ENCODE measurements at regions of chr5 and their contacts with region 1.

Region 1: DNA sequence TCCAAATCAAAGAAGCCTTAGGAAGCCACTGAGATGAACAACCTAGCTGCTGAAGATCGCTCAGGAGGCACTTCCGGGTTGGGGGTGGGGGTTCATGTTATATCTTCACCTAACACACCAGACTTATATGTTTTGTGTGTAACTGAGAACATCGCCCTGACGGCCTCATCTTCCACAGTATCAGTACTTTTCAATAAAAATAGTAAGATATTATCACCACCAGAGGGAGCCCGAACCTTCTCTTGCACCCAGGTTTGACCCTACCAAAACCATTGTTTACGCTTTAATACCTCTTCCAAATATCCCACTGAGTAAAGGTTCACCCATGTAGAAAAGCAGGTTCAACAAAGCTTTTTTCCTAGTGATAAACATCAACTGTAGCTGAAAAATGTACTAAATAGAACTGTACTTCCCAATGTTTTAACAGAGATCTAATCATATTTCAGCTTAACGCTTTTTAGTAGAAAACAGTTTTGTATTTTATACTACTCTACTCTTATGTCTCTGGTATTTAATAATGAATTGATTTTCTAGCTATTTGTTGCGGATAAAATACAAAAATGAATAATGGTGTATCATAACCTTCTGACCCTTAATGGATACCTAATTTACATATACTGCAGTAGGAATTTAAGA is 244.0 kb downstream of the EPB41L4A start:
- DNase-seq: peak; percentile 67
- H3K4me3 ChIP-seq: peak overlapping the region; percentile 17 to 31; a peak in 1 of 4 replicates
- H3K27ac ChIP-seq: no peak overlapping the region
- H3K4me1 ChIP-seq: peaks cover 0 to 2% of the 10 kb centered on the region in 2 experiments; a peak in 1 of 4 replicates
- H3K27me3 ChIP-seq: no peaks in the 10 kb centered on the region
- CTCF ChIP-seq: peak; percentile 81
- EP300 ChIP-seq: no peak
- RAD21 ChIP-seq: peak; percentile 80

Region 2: DNA sequence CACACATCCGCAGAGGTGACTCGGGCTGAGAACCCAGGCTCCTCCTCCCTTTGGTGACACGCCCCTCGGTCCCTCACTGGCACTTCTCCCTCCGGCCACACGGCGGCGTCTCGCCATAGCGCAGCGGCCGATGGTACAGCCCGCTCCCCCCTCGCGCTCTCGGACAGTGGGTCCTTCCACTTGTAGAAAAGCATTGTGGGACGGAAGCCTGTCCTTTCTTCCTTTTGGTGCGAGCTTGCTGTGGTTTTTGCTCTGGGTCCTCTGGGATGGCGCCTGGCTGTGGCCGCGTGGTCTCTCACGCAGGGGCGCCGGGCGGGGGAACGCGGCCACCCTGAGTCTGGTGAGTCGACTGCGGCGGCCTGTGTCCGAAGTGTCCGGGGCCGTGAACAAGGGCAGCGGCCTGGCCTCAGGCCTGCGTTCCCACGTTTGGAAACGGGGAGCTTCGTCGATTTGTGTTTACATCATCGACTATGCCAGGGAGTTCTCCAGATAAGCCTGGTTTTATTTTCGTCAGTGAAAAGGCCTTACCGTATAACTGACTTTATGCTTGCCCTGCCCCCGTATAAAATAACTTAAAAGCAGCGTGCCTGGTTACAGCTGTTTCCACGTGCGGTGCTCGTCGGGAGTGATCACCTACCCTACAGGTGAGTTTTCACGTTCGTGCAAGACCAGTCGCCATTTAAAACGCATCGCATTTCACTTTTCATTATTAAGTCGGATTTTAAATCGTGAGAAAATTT is 14.3 kb before region 1 on chr5:
- CTCF ChIA-PET with region 1: interaction called, 49 read pairs
- POLR2A ChIA-PET with region 1: no interaction called
- DNase-seq: peak; percentile 92
- H3K4me3 ChIP-seq: peak overlapping the region; percentile 86 to 97
- H3K27ac ChIP-seq: peak overlapping the region; percentile 66 to 81; a peak in 3 of 4 replicates
- H3K4me1 ChIP-seq: peaks cover 0 to 9% of the 10 kb centered on the region in 2 experiments; a peak in 3 of 4 replicates
- H3K27me3 ChIP-seq: no peaks in the 10 kb centered on the region
- CTCF ChIP-seq: peak; percentile 96
- EP300 ChIP-seq: peak in 1 of 2 experiments; percentile 78; a peak in 1 of 4 replicates
- RAD21 ChIP-seq: 0 out of 2 replicates have a peak, but pooled peaks have one; percentile 28

Region 3: GRCh38 chr5:112186401-112186990 is 11.4 kb after region 1 on chr5:
- CTCF ChIA-PET with region 1: interaction called, 22 read pairs
- POLR2A ChIA-PET with region 1: no interaction called
- DNase-seq: peak; percentile 44
- H3K4me3 ChIP-seq: no peak overlapping the region; a peak in 1 of 4 replicates
- H3K27ac ChIP-seq: no peak overlapping the region
- H3K4me1 ChIP-seq: no peaks in the 10 kb centered on the region; a peak in 1 of 4 replicates
- H3K27me3 ChIP-seq: 0 out of 2 replicates have a peak, but pooled peaks cover 4% of the 10 kb centered on the region
- CTCF ChIP-seq: peak; percentile 73
- EP300 ChIP-seq: no peak
- RAD21 ChIP-seq: peak; percentile 53